Dorsolateral prefrontal cortex (tissue), 120 donors: ENCODE measurements at regions of chr7 and their contacts with region 1.

Region 1: GRCh38 chr7:2709553-2710285 is 21.7 kb downstream of the AMZ1 start:
- DNase-seq: peak in 9 of 10 donors; percentile 59 to 83 (median 66)
- H3K4me3 ChIP-seq: peak overlapping the region in 11 of 59 donors; percentile 6 to 43 (median 22)
- H3K27ac ChIP-seq: peak overlapping the region in 2 of 59 donors; percentile 57 to 70
- H3K27me3 ChIP-seq: no peaks in the 10 kb centered on the region
- CTCF ChIP-seq: peak; percentile 34 to 97 (median 86)

Region 2: DNA sequence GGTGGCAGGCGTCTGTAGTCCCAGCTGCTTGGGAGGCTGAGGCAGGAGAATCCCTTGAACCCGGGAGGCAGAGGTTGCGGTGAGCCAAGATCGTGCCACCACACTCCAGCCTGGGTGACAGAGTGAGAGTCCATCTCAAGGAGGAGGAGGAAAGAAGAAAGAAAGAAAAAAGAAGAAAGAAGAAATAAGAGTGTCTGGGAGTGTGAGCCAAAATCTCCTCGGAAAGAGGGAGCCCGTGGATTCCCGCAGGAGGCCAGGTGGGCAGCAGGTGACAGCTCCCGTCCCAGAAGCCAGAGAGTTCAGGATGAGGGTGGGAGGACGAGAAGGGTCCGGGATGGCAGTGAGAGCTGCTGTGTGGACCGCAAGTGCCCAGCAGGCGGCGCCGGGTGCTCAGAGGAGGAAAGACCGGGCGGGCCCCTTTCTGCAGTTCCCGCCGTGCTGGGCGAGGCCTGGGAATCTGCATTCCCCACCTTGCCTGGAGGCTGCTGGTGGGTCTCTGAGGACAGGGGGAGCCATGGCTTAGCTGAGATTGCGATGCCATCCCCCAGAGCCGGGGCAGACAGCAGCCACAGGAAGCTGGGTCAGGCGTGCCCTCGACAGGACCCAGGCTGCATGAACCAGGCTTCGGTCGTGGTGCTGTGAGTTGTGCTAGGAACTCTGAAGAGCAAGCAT is 38.9 kb before region 1 on chr7:
- intact Hi-C with region 1: loop called (anchors 2 kb)
- DNase-seq: peak in 8 of 10 donors; percentile 57 to 79 (median 64)
- H3K4me3 ChIP-seq: no peak overlapping the region
- H3K27ac ChIP-seq: no peak overlapping the region
- H3K27me3 ChIP-seq: no peaks in the 10 kb centered on the region
- CTCF ChIP-seq: peak; percentile 57 to 95 (median 87)

Region 3: DNA sequence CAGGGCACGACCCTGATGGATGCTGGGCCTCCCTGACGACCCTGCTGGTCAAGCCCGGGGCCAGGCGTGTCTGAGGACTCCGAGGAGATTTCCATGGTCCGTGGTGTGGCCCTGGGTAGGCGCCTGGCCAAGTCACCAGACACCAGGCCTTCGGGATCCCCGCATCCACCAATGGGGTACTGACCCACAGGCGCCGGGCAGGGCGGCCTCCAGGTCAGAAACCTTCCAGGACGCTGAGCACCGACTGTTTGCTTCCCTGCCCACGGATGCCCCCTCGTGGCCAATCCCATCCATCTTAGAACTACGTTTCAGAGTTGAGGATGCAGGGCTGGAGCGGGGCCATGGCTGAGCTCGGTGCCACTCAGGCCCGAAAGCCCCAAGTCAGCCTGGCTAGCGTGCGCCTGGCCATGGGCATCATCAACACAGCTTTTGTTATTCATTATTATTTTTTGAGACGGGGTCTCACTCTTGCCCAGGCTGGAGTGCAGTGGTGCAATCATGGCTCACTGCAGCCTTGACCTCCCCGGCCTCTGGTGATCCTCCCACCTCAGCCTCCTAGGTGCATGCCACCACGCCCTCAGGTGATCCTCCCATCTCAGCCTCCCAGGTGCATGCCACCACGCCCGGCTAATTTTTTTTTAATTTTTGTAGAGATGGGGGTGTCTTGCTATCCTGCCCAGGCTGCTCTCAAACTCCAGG is 28.8 kb before region 1 on chr7:
- intact Hi-C with region 1: loop called in 1 of 2 experiments (anchors 2 kb)
- DNase-seq: peak; percentile 80 to 90 (median 88)
- H3K4me3 ChIP-seq: peak overlapping the region in 13 of 59 donors; percentile 3 to 57 (median 42)
- H3K27ac ChIP-seq: peak overlapping the region in 55 of 59 donors; percentile 44 to 95 (median 90)
- H3K27me3 ChIP-seq: peaks cover 0 to 2% (median 0%) of the 10 kb centered on the region in 45 donors
- CTCF ChIP-seq: peak; percentile 56 to 92 (median 82)